CD14-positive monocyte (primary cell): ENCODE measurements at regions of chr3 and their contacts with region 1.

Region 1: GRCh38 chr3:45224824-45225464 is 1.1 kb downstream of the TMEM158 start:
- DNase-seq: peak; percentile 59 to 71 (median 70)
- H3K4me3 ChIP-seq: peak overlapping the region; percentile 16 to 61 (median 34)
- H3K4me3 Mint-ChIP-seq: peak overlapping the region; percentile 81 to 92
- H3K27ac ChIP-seq: no peak overlapping the region
- H3K27ac Mint-ChIP-seq: peak overlapping the region in 2 of 7 donors; percentile 78 to 79
- H3K4me1 ChIP-seq: peaks cover 9 to 12% of the 10 kb centered on the region in 2 donors
- H3K4me1 Mint-ChIP-seq: peaks cover 8% of the 10 kb centered on the region
- H3K27me3 ChIP-seq: peaks cover 47 to 66% of the 10 kb centered on the region in 2 donors
- H3K27me3 Mint-ChIP-seq: peaks cover 59 to 67% (median 62%) of the 10 kb centered on the region in 3 donors
- CTCF ChIP-seq: peak; percentile 68

Region 2: DNA sequence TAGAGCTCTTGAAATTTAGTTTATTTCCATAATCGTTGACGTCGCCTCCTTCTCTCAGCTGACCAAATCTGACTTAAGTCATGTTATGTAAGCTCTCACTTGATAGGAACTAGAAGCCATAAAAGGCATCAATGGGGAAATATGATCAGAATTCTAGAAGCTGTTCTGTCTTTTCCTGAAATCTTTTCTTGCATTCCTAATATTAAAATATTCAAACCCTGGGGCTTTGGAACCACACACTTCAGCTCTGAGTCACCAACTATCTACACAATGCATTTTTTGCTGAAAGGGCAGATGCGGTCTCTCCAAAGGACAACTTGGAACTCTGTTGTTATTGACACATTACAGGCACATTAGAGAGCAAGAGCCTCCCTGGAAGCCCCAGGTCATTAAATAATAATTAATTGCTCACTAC is 254.7 kb after region 1 on chr3:
- intact Hi-C with region 1: no loop called
- DNase-seq: no peak
- H3K4me3 ChIP-seq: no peak overlapping the region
- H3K4me3 Mint-ChIP-seq: no peak overlapping the region
- H3K27ac ChIP-seq: no peak overlapping the region
- H3K27ac Mint-ChIP-seq: no peak overlapping the region
- H3K4me1 ChIP-seq: no peaks in the 10 kb centered on the region
- H3K4me1 Mint-ChIP-seq: peaks cover 8% of the 10 kb centered on the region
- H3K27me3 ChIP-seq: no peaks in the 10 kb centered on the region
- H3K27me3 Mint-ChIP-seq: no peaks in the 10 kb centered on the region
- CTCF ChIP-seq: no peak

Region 3: GRCh38 chr3:45499529-45499928 is 274.6 kb after region 1 on chr3:
- intact Hi-C with region 1: loop called (anchors 2 to 5 kb)
- DNase-seq: peak; percentile 5 to 23 (median 15)
- H3K4me3 ChIP-seq: no peak overlapping the region
- H3K4me3 Mint-ChIP-seq: no peak overlapping the region
- H3K27ac ChIP-seq: no peak overlapping the region
- H3K27ac Mint-ChIP-seq: no peak overlapping the region
- H3K4me1 ChIP-seq: no peaks in the 10 kb centered on the region
- H3K4me1 Mint-ChIP-seq: no peaks in the 10 kb centered on the region
- H3K27me3 ChIP-seq: no peaks in the 10 kb centered on the region
- H3K27me3 Mint-ChIP-seq: peaks cover 0 to 2% (median 0%) of the 10 kb centered on the region in 3 donors
- CTCF ChIP-seq: peak; percentile 72

Region 4: GRCh38 chr3:45507820-45508317 is 282.9 kb after region 1 on chr3:
- intact Hi-C with region 1: loop called in 1 of 2 experiments (anchors 5 kb)
- DNase-seq: no peak
- H3K4me3 ChIP-seq: no peak overlapping the region
- H3K4me3 Mint-ChIP-seq: no peak overlapping the region
- H3K27ac ChIP-seq: no peak overlapping the region
- H3K27ac Mint-ChIP-seq: no peak overlapping the region
- H3K4me1 ChIP-seq: no peaks in the 10 kb centered on the region
- H3K4me1 Mint-ChIP-seq: no peaks in the 10 kb centered on the region
- H3K27me3 ChIP-seq: no peaks in the 10 kb centered on the region
- H3K27me3 Mint-ChIP-seq: no peaks in the 10 kb centered on the region
- CTCF ChIP-seq: peak; percentile 23

Region 5: DNA sequence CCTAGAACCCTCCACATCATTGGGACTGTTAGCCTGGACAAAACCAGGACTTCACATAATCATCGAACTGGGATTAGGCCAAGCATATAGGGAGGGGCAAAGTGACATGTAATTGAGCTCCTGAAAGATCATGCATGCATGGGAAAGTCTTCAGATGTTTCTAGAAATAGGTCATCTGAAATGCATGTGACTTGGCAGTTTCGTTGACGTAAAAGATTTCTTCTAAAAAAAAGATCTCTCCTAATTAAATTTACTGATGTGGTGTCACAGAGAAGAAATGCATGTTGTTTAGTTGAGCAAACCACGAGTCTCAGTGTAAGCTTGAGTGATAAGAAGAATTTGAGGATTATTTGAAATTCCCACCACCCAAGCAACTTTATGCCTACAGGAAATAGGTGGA is 299.6 kb after region 1 on chr3:
- intact Hi-C with region 1: no loop called
- DNase-seq: no peak
- H3K4me3 ChIP-seq: no peak overlapping the region
- H3K4me3 Mint-ChIP-seq: no peak overlapping the region
- H3K27ac ChIP-seq: no peak overlapping the region
- H3K27ac Mint-ChIP-seq: no peak overlapping the region
- H3K4me1 ChIP-seq: no peaks in the 10 kb centered on the region
- H3K4me1 Mint-ChIP-seq: no peaks in the 10 kb centered on the region
- H3K27me3 ChIP-seq: no peaks in the 10 kb centered on the region
- H3K27me3 Mint-ChIP-seq: no peaks in the 10 kb centered on the region
- CTCF ChIP-seq: no peak

Region 6: DNA sequence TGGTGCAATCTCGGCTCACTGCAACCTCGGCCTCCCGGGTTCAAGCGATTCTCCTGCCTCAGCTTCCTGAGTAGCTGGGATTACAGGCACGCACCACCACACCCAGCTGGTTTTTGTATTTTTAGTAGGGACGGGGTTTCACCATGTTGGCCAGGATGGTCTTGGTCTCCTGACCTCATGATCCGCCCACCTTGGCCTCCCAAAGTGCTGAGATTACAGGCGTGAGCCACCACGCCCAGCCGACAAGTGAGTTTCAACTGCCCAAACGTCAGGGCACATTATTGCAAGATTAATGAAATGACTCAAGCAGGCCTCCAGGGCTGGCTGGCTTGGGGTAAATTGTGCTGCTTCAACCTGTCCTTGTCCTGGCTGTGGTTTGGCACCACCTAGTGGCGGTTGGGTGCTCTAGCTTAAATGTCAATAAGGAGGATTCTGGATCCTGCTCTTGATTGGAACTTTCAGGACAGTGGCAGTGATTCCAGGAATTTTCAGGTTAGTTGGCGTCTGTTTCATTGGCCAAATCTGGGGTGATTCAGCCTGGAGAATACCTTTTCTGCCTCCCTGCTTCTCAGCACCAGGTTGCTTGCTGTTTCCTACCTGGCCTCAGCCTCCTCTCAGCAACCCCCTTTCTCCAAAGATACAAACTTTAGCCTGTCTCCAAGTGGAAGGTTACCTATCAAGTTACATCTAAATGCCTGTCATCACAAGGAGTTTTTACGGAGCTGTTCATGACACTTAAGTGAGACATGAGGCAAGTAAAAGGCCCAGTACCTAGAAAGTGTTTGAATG is 431.8 kb after region 1 on chr3:
- intact Hi-C with region 1: loop called in 1 of 2 experiments (anchors 10 kb)
- DNase-seq: peak; percentile 95 to 97 (median 96)
- H3K4me3 ChIP-seq: no peak overlapping the region
- H3K4me3 Mint-ChIP-seq: peak overlapping the region; percentile 53 to 60
- H3K27ac ChIP-seq: peak overlapping the region; percentile 42 to 65
- H3K27ac Mint-ChIP-seq: peak overlapping the region; percentile 92 to 98 (median 97)
- H3K4me1 ChIP-seq: peaks cover 36 to 40% of the 10 kb centered on the region in 2 donors
- H3K4me1 Mint-ChIP-seq: peaks cover 46% of the 10 kb centered on the region
- H3K27me3 ChIP-seq: no peaks in the 10 kb centered on the region
- H3K27me3 Mint-ChIP-seq: no peaks in the 10 kb centered on the region
- CTCF ChIP-seq: peak; percentile 85